SK-N-SH (cell line): ENCODE measurements at regions of chr9 and their contacts with region 1.

Region 1: GRCh38 chr9:130235897-130236668 is 29.5 kb upstream of the HMCN2 start:
- DNase-seq: peak; percentile 90
- H3K4me3 ChIP-seq: peak overlapping the region in 1 of 2 experiments; percentile 47; a peak in 1 of 4 replicates
- H3K27ac ChIP-seq: no peak overlapping the region; a peak in 1 of 4 replicates
- H3K4me1 ChIP-seq: peaks cover 0 to 15% of the 10 kb centered on the region in 2 experiments; a peak in 1 of 4 replicates
- H3K27me3 ChIP-seq: no peaks in the 10 kb centered on the region
- CTCF ChIP-seq: peak; percentile 98
- EP300 ChIP-seq: no peak
- RAD21 ChIP-seq: peak; percentile 86

Region 2: GRCh38 chr9:130112538-130113151 is 123.4 kb before region 1 on chr9:
- CTCF ChIA-PET with region 1: interaction called, 73 read pairs
- POLR2A ChIA-PET with region 1: no interaction called
- DNase-seq: no peak
- H3K4me3 ChIP-seq: no peak overlapping the region
- H3K27ac ChIP-seq: no peak overlapping the region
- H3K4me1 ChIP-seq: peaks cover 0 to 19% of the 10 kb centered on the region in 2 experiments; a peak in 3 of 4 replicates
- H3K27me3 ChIP-seq: no peaks in the 10 kb centered on the region
- CTCF ChIP-seq: no peak
- EP300 ChIP-seq: no peak
- RAD21 ChIP-seq: no peak

Region 3: GRCh38 chr9:130156672-130157071 is 79.4 kb before region 1 on chr9:
- CTCF ChIA-PET with region 1: interaction called, 10 read pairs
- POLR2A ChIA-PET with region 1: no interaction called
- DNase-seq: peak; percentile 70
- H3K4me3 ChIP-seq: no peak overlapping the region
- H3K27ac ChIP-seq: no peak overlapping the region
- H3K4me1 ChIP-seq: no peaks in the 10 kb centered on the region; a peak in 1 of 4 replicates
- H3K27me3 ChIP-seq: no peaks in the 10 kb centered on the region
- CTCF ChIP-seq: peak; percentile 33; the same call in 1 of the 2 replicates
- EP300 ChIP-seq: no peak
- RAD21 ChIP-seq: peak; percentile 55

Region 4: DNA sequence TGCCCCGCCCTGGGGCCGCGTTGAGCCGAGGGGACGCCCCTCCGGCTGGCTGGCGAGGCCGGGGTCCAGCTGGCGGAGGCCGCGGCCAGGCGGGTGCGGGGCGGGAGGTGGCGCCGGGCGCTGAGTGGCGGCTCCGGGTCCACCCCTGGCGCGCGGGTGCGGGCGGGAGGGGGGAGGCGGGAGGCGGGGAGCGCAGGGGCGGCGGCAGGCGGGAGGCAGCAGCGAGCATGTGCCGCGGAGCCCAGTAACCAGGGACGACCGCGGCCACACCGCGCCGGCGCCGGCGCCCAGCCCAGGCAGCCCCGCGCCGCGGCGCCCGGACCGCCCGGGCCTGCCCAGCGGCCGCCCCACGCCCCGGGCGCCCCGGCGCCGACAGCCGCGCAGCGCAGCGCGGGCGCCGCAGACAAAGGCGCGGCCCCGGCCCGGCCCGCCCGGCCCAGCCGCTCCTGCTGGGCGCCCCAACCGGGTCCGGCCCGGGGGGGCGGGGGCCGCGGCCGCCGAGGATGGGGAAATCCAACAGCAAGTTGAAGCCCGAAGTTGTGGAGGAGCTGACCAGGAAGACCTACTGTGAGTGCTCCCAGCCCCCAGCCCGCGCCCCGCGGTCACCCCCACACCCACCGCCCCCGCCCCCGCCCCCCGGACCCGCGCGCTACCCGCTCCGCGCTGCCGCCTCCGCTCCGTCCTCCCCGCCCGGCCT is 63.8 kb before region 1 on chr9 and contains the start of gene NCS1:
- CTCF ChIA-PET with region 1: interaction called, 10 read pairs
- POLR2A ChIA-PET with region 1: no interaction called
- DNase-seq: peak; percentile 99
- H3K4me3 ChIP-seq: peak within 1 kb of the TSS; percentile 67 to 82
- H3K27ac ChIP-seq: peak within 1 kb of the TSS; percentile 30 to 64; a peak in 3 of 4 replicates
- H3K4me1 ChIP-seq: peaks cover 6 to 20% of the 10 kb centered on the region in 2 experiments; a peak in 1 of 4 replicates
- H3K27me3 ChIP-seq: no peaks in the 10 kb centered on the region
- CTCF ChIP-seq: no peak
- EP300 ChIP-seq: no peak
- RAD21 ChIP-seq: no peak
- polyA plus RNA-seq, gene NCS1: 40.6 and 52.9 TPM in 2 replicates

Region 5: GRCh38 chr9:130254752-130255630 is 18.9 kb after region 1 on chr9:
- CTCF ChIA-PET with region 1: interaction called, 10 read pairs
- POLR2A ChIA-PET with region 1: no interaction called
- DNase-seq: no peak
- H3K4me3 ChIP-seq: no peak overlapping the region
- H3K27ac ChIP-seq: no peak overlapping the region
- H3K4me1 ChIP-seq: peaks cover 0 to 6% of the 10 kb centered on the region in 2 experiments; a peak in 1 of 4 replicates
- H3K27me3 ChIP-seq: no peaks in the 10 kb centered on the region; the same call in 1 of the 2 replicates
- CTCF ChIP-seq: no peak
- EP300 ChIP-seq: no peak
- RAD21 ChIP-seq: no peak